Heart right ventricle (tissue), 16 donors: ENCODE measurements at regions of chr20 and their contacts with region 1.

Region 1: DNA sequence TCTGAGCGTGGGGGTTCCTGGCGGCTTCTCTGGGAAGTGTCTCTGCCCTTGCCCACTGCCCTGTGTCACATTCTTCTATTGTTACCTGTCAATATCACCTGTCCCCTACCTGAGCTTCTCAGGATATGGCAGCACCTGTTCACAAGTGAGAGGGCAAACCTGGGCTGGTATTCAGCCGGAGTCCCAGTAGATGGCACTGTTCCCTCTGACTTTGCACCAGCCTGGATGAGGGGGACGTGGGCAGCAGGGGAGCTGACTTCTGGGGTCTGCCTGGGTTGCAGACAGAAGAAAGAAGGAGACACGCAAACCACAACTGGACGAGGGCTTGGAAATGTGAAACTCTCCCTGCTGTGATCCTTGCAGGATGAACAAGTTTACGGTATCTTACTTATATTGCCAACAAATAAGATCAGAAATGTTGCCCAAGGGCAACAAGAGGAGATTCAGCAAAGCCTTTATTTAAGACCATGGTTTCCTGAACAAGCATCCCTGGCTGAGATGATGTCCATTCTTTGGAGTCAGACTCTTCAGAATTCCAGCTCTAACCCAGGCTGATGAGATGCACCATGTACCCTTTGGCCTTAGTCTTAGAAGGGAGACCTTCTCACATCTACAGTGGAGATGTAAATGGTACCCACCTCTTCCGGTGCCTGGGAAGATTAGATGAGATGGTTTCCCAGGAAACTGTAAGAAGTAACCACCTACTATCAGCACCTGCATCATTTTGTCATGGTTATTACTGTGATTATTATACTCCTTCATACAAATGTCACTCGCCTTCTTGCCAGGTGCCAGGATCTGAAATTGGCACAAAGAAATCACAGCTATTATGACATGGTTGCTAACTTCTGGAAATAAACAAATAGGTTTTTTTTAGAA is 400.0 kb upstream of the CDH4 start:
- DNase-seq: no peak
- ATAC-seq: peak in 1 of 8 donors; percentile 41
- H3K4me3 ChIP-seq: no peak overlapping the region
- H3K27ac ChIP-seq: no peak overlapping the region
- H3K4me1 ChIP-seq: no peaks in the 10 kb centered on the region
- H3K27me3 ChIP-seq: peaks cover 0 to 22% (median 3%) of the 10 kb centered on the region in 7 donors
- CTCF ChIP-seq: peak in 7 of 9 donors; percentile 26 to 52 (median 41)

Region 2: GRCh38 chr20:61120595-61121515 is 268.8 kb after region 1 on chr20:
- intact Hi-C with region 1: loop called in 2 of 10 experiments (anchors 10 kb)
- DNase-seq: peak in 1 of 2 donors; percentile 34
- ATAC-seq: peak in 3 of 8 donors; percentile 50 to 63 (median 57)
- H3K4me3 ChIP-seq: no peak overlapping the region
- H3K27ac ChIP-seq: no peak overlapping the region
- H3K4me1 ChIP-seq: peaks cover 0 to 2% (median 0%) of the 10 kb centered on the region in 9 donors
- H3K27me3 ChIP-seq: peaks cover 0 to 23% (median 0%) of the 10 kb centered on the region in 7 donors
- CTCF ChIP-seq: peak in 8 of 9 donors; percentile 19 to 65 (median 53)